ENCODE measurements at regions of chr2 and their contacts with region 1.

Region 1: DNA sequence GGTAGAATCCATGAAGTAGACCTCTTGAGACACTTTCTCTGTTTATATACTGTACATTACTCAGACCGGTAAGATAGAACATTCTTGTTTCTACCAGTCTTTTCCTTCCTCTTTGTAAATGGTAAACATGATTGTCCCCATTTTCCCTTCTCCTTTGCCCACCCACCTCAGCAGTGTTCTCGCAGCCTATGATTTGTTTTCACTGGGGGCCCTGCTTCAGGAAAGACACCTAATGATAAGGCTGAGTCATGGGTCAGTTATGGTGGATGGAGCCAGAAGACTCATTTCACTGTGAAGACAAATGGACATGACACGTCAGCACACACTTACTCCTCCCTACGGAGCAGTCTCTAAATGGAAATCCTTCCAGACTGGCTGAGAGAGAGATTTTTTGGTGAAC is 23.7 kb downstream of the CENPO start:
- H3K4me3 Mint-ChIP-seq: no peak overlapping the region
- H3K27ac Mint-ChIP-seq: no peak overlapping the region
- H3K4me1 Mint-ChIP-seq: peaks cover 24% of the 10 kb centered on the region
- H3K27me3 Mint-ChIP-seq: no peaks in the 10 kb centered on the region

Region 2: GRCh38 chr2:24766609-24767008 is 50.3 kb before region 1 on chr2:
- intact Hi-C with region 1: loop called (anchors 10 kb)
- H3K4me3 Mint-ChIP-seq: no peak overlapping the region
- H3K27ac Mint-ChIP-seq: peak overlapping the region; percentile 2
- H3K4me1 Mint-ChIP-seq: no peaks in the 10 kb centered on the region
- H3K27me3 Mint-ChIP-seq: no peaks in the 10 kb centered on the region

Region 3: DNA sequence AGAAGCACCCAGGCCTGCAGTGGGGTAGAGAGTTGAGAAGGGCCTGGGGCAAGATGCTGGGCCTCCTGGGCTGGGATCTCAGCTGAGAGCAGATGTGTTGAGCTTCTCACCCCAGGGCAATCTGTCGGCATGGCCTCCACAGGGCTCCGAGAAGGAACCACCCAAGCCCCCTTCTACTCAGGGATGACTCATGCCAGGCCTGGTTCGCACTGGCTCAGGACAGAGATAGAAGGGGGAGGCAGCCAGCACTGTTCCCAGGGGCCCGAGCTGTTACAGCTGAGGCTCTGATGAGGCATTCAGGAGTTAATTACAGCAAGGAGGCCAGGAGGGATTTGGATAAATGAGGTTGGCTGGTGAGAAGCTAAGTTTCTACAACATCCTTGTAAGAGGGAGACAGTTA is 38.8 kb after region 1 on chr2:
- intact Hi-C with region 1: no loop called
- H3K4me3 Mint-ChIP-seq: no peak overlapping the region
- H3K27ac Mint-ChIP-seq: peak overlapping the region; percentile 12
- H3K4me1 Mint-ChIP-seq: peaks cover 6% of the 10 kb centered on the region
- H3K27me3 Mint-ChIP-seq: no peaks in the 10 kb centered on the region

Region 4: GRCh38 chr2:24959761-24960160 is 142.9 kb after region 1 on chr2:
- intact Hi-C with region 1: no loop called
- H3K4me3 Mint-ChIP-seq: no peak overlapping the region
- H3K27ac Mint-ChIP-seq: no peak overlapping the region
- H3K4me1 Mint-ChIP-seq: no peaks in the 10 kb centered on the region
- H3K27me3 Mint-ChIP-seq: no peaks in the 10 kb centered on the region

Measured in dendritic cell treated with granulocyte-macrophage colony-stimulating factor and Interleukin-4, amounts not matched to agents 40 ng/mL and 50 ng/mL, for 4 days (primary cell).